BJ (cell line): ENCODE measurements at regions of chr3 and their contacts with region 1.

Region 1: GRCh38 chr3:134640872-134641470 is 9.9 kb downstream of the KY start:
- DNase-seq: no peak
- H3K4me3 ChIP-seq: no peak overlapping the region
- H3K27me3 ChIP-seq: no peaks in the 10 kb centered on the region; the same call in none of the 2 replicates
- CTCF ChIP-seq: peak; percentile 71

Region 2: GRCh38 chr3:134394380-134394779 is 246.6 kb before region 1 on chr3:
- CTCF ChIA-PET with region 1: no interaction called
- POLR2A ChIA-PET with region 1: no interaction called
- DNase-seq: no peak
- H3K4me3 ChIP-seq: no peak overlapping the region
- H3K27me3 ChIP-seq: peaks cover 3% of the 10 kb centered on the region; the same call in 1 of the 2 replicates
- CTCF ChIP-seq: no peak

Region 3: GRCh38 chr3:134630506-134630905 is 10.5 kb before region 1 on chr3:
- CTCF ChIA-PET with region 1: interaction called, 11 read pairs
- POLR2A ChIA-PET with region 1: no interaction called
- DNase-seq: no peak
- H3K4me3 ChIP-seq: no peak overlapping the region
- H3K27me3 ChIP-seq: no peaks in the 10 kb centered on the region
- CTCF ChIP-seq: peak; percentile 69